ENCODE measurements at regions of chr1 and their contacts with region 1.

Region 1: DNA sequence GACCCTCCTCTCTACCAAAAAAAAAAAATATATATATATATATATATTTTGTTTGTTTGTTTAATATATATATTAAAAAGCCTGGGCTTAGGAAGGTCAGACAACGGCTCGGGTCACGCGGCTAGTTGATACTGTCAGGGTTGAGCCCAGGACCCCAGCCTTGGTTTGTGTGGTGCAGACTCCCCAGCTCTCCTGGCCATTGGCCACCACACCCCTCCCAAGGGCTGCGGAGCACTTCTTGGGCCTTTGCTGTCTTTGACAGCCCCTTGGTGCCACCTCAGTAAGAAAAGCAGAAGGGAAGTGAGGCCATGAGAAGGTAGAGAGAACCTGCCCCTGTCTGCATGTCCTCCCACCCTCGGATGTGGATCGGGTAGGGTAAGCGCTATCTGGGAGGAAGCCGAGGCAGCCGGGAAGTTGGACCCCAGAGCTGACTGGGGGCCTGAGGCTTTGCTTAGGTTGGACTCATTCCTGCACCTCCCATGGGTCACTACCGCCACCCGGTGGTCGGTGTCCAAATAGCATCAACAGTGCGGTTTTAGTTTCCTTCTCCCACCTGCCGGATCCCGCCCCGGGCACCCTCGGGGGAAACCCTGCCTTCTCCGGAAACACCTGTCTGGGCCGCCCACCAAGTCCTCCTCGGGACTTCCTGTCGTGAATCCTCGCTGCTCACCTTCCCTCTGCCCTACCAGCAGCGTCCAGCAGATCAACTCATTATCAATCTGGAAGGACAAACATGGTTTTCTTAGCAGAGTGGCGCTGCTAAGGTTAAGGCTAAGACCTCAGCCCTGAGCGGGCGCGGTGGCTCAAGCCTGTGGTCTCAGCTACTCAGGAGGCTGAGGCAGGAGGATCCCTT is 29.8 kb upstream of the GNPAT start:
- DNase-seq: peak; percentile 94
- H3K4me3 ChIP-seq: peak overlapping the region; percentile 5 to 51 (median 40)
- H3K27ac ChIP-seq: peak overlapping the region; percentile 38 to 68 (median 56)
- H3K4me1 ChIP-seq: peaks cover 0 to 7% (median 6%) of the 10 kb centered on the region in 4 donors
- H3K27me3 ChIP-seq: no peaks in the 10 kb centered on the region
- CTCF ChIP-seq: peak; percentile 87 to 93 (median 89)
- EP300 ChIP-seq: no peak
- POLR2A ChIP-seq: no peak

Region 2: DNA sequence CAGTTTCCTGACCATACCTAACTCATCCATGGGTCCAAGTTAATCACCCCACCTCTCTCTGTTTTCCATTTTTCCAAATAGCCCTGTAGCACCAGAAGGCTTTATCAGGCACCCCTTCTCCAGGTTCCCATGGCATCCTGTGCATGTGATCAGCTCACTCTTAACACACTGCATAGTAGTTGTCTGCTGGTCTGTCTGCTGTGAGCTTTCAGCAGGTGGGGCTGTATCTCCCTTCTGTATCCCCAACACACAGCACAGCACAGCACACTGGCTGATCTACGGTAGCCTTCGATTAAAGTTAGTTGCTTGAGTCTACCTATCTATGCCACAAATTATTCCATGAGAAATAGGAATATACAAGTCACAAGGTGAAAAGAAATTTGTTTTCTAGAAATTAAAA is 288.6 kb before region 1 on chr1:
- in situ Hi-C with region 1: loop called (anchors 10 to 25 kb)
- intact Hi-C with region 1: no loop called
- DNase-seq: no peak
- H3K4me3 ChIP-seq: no peak overlapping the region
- H3K27ac ChIP-seq: no peak overlapping the region
- H3K4me1 ChIP-seq: no peaks in the 10 kb centered on the region
- H3K27me3 ChIP-seq: no peaks in the 10 kb centered on the region
- CTCF ChIP-seq: no peak
- EP300 ChIP-seq: no peak
- POLR2A ChIP-seq: no peak

Region 3: DNA sequence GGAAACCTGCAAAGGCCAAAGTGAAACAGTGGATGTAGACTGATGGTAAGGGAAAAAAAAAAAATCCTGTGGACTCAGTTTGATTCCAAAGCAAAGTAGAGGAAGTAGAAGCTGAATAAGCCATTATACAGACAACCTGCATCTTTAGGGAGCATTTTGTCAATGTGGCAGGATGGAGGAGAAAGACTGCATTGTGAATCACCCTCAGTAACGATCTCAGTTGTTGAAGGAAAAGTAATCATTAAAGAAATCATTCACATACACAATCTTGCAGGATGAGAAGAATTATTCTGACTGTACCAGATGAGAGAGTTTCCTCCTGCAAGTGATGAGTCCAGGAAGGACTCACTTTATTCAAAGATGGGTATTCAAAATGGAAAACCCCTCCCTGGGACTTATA is 94.5 kb before region 1 on chr1:
- in situ Hi-C with region 1: no loop called
- intact Hi-C with region 1: no loop called
- DNase-seq: no peak
- H3K4me3 ChIP-seq: no peak overlapping the region
- H3K27ac ChIP-seq: no peak overlapping the region
- H3K4me1 ChIP-seq: no peaks in the 10 kb centered on the region
- H3K27me3 ChIP-seq: peaks cover 13% of the 10 kb centered on the region
- CTCF ChIP-seq: no peak
- EP300 ChIP-seq: no peak
- POLR2A ChIP-seq: no peak

Region 4: GRCh38 chr1:231187571-231187970 is 23.7 kb before region 1 on chr1:
- in situ Hi-C with region 1: no loop called
- intact Hi-C with region 1: no loop called
- DNase-seq: no peak
- H3K4me3 ChIP-seq: no peak overlapping the region
- H3K27ac ChIP-seq: no peak overlapping the region
- H3K4me1 ChIP-seq: peaks cover 0 to 1% (median under 1%) of the 10 kb centered on the region in 4 donors
- H3K27me3 ChIP-seq: peaks cover 35% of the 10 kb centered on the region
- CTCF ChIP-seq: no peak
- EP300 ChIP-seq: no peak
- POLR2A ChIP-seq: no peak

Region 5: DNA sequence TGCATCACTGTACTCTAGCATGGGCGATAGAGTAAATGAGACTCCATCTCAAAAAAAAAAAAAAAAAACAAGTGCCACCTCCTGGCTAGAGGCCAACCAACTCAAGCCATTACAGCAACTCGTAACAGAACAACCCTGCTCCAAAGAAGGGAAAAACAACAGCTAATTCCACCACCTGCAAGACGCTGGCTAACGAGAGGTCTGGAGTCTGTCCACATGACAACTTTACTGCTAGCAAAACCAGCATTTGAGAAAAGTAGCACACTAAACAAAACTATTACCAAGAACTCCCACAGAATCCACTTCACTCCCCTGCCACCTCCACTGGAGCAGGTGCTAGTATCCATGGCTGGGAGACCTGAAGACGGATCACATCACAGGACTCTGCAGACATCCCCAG is 234.9 kb after region 1 on chr1:
- in situ Hi-C with region 1: no loop called
- intact Hi-C with region 1: no loop called
- DNase-seq: no peak
- H3K4me3 ChIP-seq: no peak overlapping the region
- H3K27ac ChIP-seq: no peak overlapping the region
- H3K4me1 ChIP-seq: no peaks in the 10 kb centered on the region
- H3K27me3 ChIP-seq: no peaks in the 10 kb centered on the region
- CTCF ChIP-seq: no peak
- EP300 ChIP-seq: no peak
- POLR2A ChIP-seq: no peak